ENCODE measurements at regions of chr22 and their contacts with region 1.

Region 1: GRCh38 chr22:44080936-44081861 is 57.1 kb downstream of the PARVB start:
- DNase-seq: peak; percentile 75
- H3K4me3 Mint-ChIP-seq: no peak overlapping the region
- H3K27ac Mint-ChIP-seq: no peak overlapping the region
- H3K4me1 Mint-ChIP-seq: peaks cover 7% of the 10 kb centered on the region
- H3K27me3 Mint-ChIP-seq: peaks cover 12% of the 10 kb centered on the region
- CTCF ChIP-seq: peak; percentile 68

Region 2: GRCh38 chr22:43884600-43885325 is 196.4 kb before region 1 on chr22:
- CTCF ChIA-PET with region 1: interaction called, 13 read pairs
- intact Hi-C with region 1: no loop called
- DNase-seq: peak; percentile 84
- H3K4me3 Mint-ChIP-seq: no peak overlapping the region
- H3K27ac Mint-ChIP-seq: no peak overlapping the region
- H3K4me1 Mint-ChIP-seq: no peaks in the 10 kb centered on the region
- H3K27me3 Mint-ChIP-seq: peaks cover 76% of the 10 kb centered on the region
- CTCF ChIP-seq: peak; percentile 93

Region 3: GRCh38 chr22:43993027-43993760 is 88.0 kb before region 1 on chr22:
- CTCF ChIA-PET with region 1: interaction called, 56 read pairs
- intact Hi-C with region 1: no loop called
- DNase-seq: peak; percentile 53
- H3K4me3 Mint-ChIP-seq: no peak overlapping the region
- H3K27ac Mint-ChIP-seq: no peak overlapping the region
- H3K4me1 Mint-ChIP-seq: no peaks in the 10 kb centered on the region
- H3K27me3 Mint-ChIP-seq: no peaks in the 10 kb centered on the region
- CTCF ChIP-seq: peak; percentile 91

Region 4: DNA sequence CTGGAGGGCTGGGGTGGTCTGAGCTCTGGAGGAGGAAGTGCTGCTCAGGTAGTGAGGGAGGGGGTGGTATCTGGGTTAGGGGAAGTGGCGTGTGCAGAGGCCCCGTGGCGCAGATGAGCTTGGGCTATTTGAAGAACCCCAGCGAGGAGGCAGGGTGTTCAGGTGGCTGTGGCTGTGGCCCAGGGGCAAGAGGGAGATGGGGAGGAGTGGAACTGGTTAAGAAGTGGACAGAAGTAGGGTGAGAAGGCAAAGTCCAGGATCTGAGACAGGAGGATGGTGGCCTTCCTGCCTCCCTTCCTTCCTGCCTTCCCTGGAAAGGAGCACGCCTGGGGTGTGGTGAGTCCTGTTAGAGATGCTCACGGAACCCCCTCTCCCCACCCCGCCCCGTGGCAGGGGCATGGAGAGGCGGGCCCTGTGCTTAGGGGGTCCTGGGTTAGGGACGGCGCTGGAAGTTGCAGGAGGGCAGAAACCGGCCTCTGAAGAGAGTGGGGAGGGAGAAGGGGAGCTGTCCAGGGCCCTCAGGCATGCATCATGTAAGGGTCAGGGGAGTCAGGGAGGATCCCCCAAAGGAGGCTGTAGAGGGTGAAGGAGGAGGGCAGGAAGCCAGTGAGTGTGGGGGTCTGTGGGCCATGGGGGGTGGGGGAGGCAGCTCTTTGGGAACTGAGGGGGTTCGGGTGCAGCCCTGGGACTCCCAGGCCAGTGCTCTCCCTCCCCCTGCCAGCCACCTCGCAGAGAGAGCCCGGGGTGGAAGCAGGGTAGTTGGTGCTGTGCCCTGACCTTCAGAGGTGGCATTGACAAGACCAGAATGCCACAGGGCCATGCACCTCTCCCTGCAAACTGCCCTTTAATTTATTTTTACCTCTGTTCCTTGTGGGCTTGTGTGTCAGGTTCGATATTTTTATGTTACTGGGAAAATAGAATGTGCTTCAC is 35.8 kb after region 1 on chr22:
- CTCF ChIA-PET with region 1: no interaction called
- intact Hi-C with region 1: no loop called
- DNase-seq: no peak
- H3K4me3 Mint-ChIP-seq: no peak overlapping the region
- H3K27ac Mint-ChIP-seq: no peak overlapping the region
- H3K4me1 Mint-ChIP-seq: no peaks in the 10 kb centered on the region
- H3K27me3 Mint-ChIP-seq: no peaks in the 10 kb centered on the region
- CTCF ChIP-seq: no peak

Region 5: GRCh38 chr22:44133901-44134571 is 52.8 kb after region 1 on chr22:
- CTCF ChIA-PET with region 1: no interaction called
- intact Hi-C with region 1: no loop called
- DNase-seq: no peak
- H3K4me3 Mint-ChIP-seq: no peak overlapping the region
- H3K27ac Mint-ChIP-seq: no peak overlapping the region
- H3K4me1 Mint-ChIP-seq: peaks cover 8% of the 10 kb centered on the region
- H3K27me3 Mint-ChIP-seq: no peaks in the 10 kb centered on the region
- CTCF ChIP-seq: no peak

Region 6: GRCh38 chr22:44625981-44626687 is 544.9 kb after region 1 on chr22:
- CTCF ChIA-PET with region 1: interaction called, 10 read pairs
- intact Hi-C with region 1: loop called (anchors 2 kb)
- DNase-seq: peak; percentile 77
- H3K4me3 Mint-ChIP-seq: no peak overlapping the region
- H3K27ac Mint-ChIP-seq: no peak overlapping the region
- H3K4me1 Mint-ChIP-seq: no peaks in the 10 kb centered on the region
- H3K27me3 Mint-ChIP-seq: peaks cover 74% of the 10 kb centered on the region
- CTCF ChIP-seq: peak; percentile 97